Gastrocnemius medialis (tissue), 4 donors: ENCODE measurements at regions of chr20 and their contacts with region 1.

Region 1: GRCh38 chr20:64119681-64120341 is 12.4 kb upstream of the NPBWR2 start:
- DNase-seq: no peak
- ATAC-seq: no peak
- H3K4me3 ChIP-seq: no peak overlapping the region
- H3K27ac ChIP-seq: no peak overlapping the region
- H3K4me1 ChIP-seq: no peaks in the 10 kb centered on the region
- H3K27me3 ChIP-seq: peaks cover 0 to 19% (median 14%) of the 10 kb centered on the region in 3 donors
- CTCF ChIP-seq: no peak
- POLR2A ChIP-seq: no peak

Region 2: DNA sequence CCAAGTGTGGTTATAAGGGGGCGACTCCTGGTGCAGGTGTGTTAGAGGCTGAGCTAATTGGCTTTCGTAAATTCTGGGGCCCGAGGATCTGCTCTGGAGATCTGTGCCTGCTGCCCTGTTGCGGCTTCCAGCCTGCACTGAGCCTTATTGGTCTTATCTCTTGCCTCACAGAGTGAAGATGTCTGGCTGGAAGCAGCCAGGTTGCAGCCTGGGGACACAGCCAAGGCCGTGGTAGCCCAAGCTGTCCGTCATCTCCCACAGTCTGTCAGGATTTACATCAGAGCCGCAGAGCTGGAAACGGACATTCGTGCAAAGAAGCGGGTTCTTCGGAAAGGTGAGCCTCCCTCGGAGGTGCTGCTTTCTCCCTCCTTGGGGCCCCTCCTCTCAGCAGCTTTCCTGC is 118.9 kb before region 1 on chr20:
- in situ Hi-C with region 1: no loop called
- intact Hi-C with region 1: no loop called
- DNase-seq: no peak
- ATAC-seq: no peak
- H3K4me3 ChIP-seq: no peak overlapping the region
- H3K27ac ChIP-seq: peak overlapping the region in 1 of 4 donors; percentile 34
- H3K4me1 ChIP-seq: no peaks in the 10 kb centered on the region
- H3K27me3 ChIP-seq: no peaks in the 10 kb centered on the region
- CTCF ChIP-seq: no peak
- POLR2A ChIP-seq: no peak

Region 3: GRCh38 chr20:64038565-64039292 is 81.1 kb before region 1 on chr20:
- in situ Hi-C with region 1: no loop called
- intact Hi-C with region 1: loop called (anchors 1 kb)
- DNase-seq: peak in 1 of 2 donors; percentile 41
- ATAC-seq: peak; percentile 58 to 72
- H3K4me3 ChIP-seq: peak overlapping the region; percentile 50 to 55 (median 52)
- H3K27ac ChIP-seq: peak overlapping the region in 3 of 4 donors; percentile 56 to 65 (median 63)
- H3K4me1 ChIP-seq: peaks cover 3 to 21% of the 10 kb centered on the region in 2 donors
- H3K27me3 ChIP-seq: peaks cover 42 to 57% (median 55%) of the 10 kb centered on the region in 3 donors
- CTCF ChIP-seq: peak; percentile 26 to 82 (median 75)
- POLR2A ChIP-seq: no peak

Region 4: GRCh38 chr20:64062596-64063388 is 57.0 kb before region 1 on chr20 and contains the start of gene TCEA2:
- in situ Hi-C with region 1: no loop called
- intact Hi-C with region 1: no loop called
- DNase-seq: peak; percentile 93 to 94
- ATAC-seq: peak; percentile 94
- H3K4me3 ChIP-seq: peak within 1 kb of the TSS; percentile 72 to 99 (median 76)
- H3K27ac ChIP-seq: peak within 1 kb of the TSS; percentile 70 to 91 (median 79)
- H3K4me1 ChIP-seq: peaks cover 10 to 24% of the 10 kb centered on the region in 2 donors
- H3K27me3 ChIP-seq: no peaks in the 10 kb centered on the region
- CTCF ChIP-seq: no peak
- POLR2A ChIP-seq: peak; percentile 63
- total RNA-seq, gene TCEA2: 8.4 to 21.0 (median 8.8) TPM

Region 5: DNA sequence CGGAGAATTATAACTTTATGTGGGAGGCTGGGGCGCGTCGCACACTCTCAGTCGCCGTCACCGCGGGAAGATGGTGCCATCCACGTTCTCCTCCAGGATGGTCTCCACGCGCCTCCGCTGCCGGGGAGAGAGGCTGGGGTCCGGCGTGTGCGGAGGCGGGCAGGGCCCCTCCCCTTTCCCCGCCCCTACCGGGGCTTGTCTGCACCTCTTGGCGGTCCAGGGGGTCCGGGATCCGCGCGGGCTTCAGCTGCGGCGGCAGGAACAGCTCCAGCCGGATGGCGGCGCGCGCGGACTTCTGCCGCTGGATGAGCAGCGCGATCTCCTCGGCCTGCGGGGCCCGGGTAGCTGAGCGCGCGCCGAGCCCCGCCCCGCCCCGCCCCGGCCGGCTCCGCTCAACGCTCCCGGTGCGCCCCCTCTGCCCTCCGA is 36.4 kb before region 1 on chr20:
- in situ Hi-C with region 1: no loop called
- intact Hi-C with region 1: loop called (anchors 1 kb)
- DNase-seq: no peak
- ATAC-seq: peak; percentile 35 to 43
- H3K4me3 ChIP-seq: peak overlapping the region; percentile 42 to 64 (median 54)
- H3K27ac ChIP-seq: no peak overlapping the region
- H3K4me1 ChIP-seq: peaks cover 12 to 14% of the 10 kb centered on the region in 2 donors
- H3K27me3 ChIP-seq: peaks cover 23 to 39% (median 35%) of the 10 kb centered on the region in 3 donors
- CTCF ChIP-seq: peak in 4 of 5 experiments; percentile 37 to 60 (median 59)
- POLR2A ChIP-seq: no peak